ENCODE measurements at regions of chr10 and their contacts with region 1.

Region 1: GRCh38 chr10:103598654-103599115 is 105.2 kb downstream of the NEURL1 start:
- DNase-seq: peak; percentile 57 to 85 (median 78)
- H3K4me3 ChIP-seq: no peak overlapping the region
- H3K27ac ChIP-seq: peak overlapping the region in 56 of 59 donors; percentile 16 to 84 (median 74)
- H3K27me3 ChIP-seq: no peaks in the 10 kb centered on the region
- CTCF ChIP-seq: peak; percentile 50 to 88 (median 81)

Region 2: GRCh38 chr10:103685880-103686669 is 87.4 kb after region 1 on chr10:
- intact Hi-C with region 1: loop called in 1 of 2 experiments (anchors 1 kb)
- DNase-seq: peak; percentile 72 to 89 (median 86)
- H3K4me3 ChIP-seq: peak overlapping the region in 2 of 59 donors; percentile 2 to 8
- H3K27ac ChIP-seq: peak overlapping the region in 46 of 59 donors; percentile 0 to 78 (median 58)
- H3K27me3 ChIP-seq: no peaks in the 10 kb centered on the region
- CTCF ChIP-seq: peak; percentile 88 to 99 (median 97)

Region 3: DNA sequence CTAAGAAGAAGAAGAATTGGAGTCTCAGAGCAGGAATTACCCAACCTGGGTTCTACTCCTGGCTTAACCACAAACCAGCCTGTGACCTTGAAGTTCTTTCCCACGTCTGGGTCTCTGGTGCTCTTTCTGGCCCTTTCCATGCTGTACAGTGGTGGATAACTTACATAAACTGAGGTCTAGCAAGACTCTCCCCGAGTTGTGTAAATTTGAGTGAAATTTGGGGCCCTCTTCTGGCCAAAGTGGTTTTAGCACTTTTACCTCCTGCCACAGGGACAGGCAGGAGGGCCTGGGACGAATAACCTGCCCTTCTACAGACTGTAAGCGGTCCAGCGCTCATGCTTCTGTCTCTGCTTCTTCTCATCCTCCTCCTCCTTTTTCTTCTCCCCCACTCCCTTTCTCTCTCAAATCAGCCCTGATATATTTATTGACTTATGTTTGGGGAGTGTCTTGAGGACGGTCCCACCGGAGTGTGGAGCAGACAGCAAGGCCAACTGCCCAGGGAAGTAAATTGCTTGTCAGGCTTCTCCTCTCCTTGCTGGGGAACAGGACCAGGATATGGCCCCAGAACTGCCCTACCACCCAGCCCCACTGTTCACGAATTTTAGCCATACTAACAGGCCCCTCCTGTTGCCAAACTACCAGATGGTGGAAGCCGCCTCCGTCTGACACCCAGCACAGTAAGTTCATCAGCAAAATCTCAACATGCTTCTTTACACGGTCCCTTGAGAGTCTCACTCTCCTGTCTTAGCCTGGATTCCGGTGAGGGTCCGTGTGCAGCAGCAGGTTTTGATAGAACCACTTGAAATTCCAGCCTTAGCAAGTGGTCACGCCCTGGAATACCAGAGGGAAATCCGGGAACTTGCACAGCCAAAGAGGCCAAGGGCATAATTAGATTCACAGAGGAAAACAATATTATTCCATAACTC is 260.7 kb after region 1 on chr10:
- intact Hi-C with region 1: loop called (anchors 2 to 5 kb)
- DNase-seq: peak in 5 of 10 donors; percentile 43 to 76 (median 71)
- H3K4me3 ChIP-seq: no peak overlapping the region
- H3K27ac ChIP-seq: peak overlapping the region in 28 of 59 donors; percentile 2 to 86 (median 50)
- H3K27me3 ChIP-seq: no peaks in the 10 kb centered on the region
- CTCF ChIP-seq: peak; percentile 53 to 94 (median 82)

Region 4: GRCh38 chr10:103888113-103888841 is 289.6 kb after region 1 on chr10:
- intact Hi-C with region 1: loop called in 1 of 2 experiments (anchors 5 kb)
- DNase-seq: peak in 1 of 10 donors; percentile 16
- H3K4me3 ChIP-seq: no peak overlapping the region
- H3K27ac ChIP-seq: peak overlapping the region in 44 of 59 donors; percentile 8 to 81 (median 58)
- H3K27me3 ChIP-seq: no peaks in the 10 kb centered on the region
- CTCF ChIP-seq: peak; percentile 61 to 95 (median 86)

Region 5: DNA sequence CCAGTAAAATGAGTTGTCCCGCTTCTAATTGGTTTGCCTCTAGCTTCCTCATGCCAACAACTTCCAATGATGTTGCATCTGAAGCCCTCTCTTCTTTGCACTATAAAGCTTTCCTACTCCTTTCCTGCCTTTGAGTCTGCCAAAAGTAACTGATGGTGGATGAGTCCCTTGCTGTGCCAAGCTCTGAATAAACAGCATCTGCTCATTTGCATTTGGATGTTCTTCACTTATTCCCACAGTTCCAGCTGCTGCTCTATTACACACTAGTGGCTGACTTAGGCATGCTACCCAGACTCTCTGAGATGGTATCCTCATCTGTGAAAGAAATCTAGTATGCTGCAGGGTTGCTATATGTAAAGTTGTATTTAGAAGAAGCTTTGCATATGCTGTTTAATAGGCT is 548.2 kb after region 1 on chr10:
- intact Hi-C with region 1: no loop called
- DNase-seq: peak in 5 of 10 donors; percentile 47 to 76 (median 51)
- H3K4me3 ChIP-seq: peak overlapping the region in 1 of 59 donors; percentile 6
- H3K27ac ChIP-seq: peak overlapping the region; percentile 54 to 97 (median 93)
- H3K27me3 ChIP-seq: no peaks in the 10 kb centered on the region
- CTCF ChIP-seq: peak in 35 of 56 donors; percentile 6 to 49 (median 28)

Measured in dorsolateral prefrontal cortex (tissue), 120 donors.